Uterus (tissue), 4 donors: ENCODE measurements at regions of chr5 and their contacts with region 1.

Region 1: DNA sequence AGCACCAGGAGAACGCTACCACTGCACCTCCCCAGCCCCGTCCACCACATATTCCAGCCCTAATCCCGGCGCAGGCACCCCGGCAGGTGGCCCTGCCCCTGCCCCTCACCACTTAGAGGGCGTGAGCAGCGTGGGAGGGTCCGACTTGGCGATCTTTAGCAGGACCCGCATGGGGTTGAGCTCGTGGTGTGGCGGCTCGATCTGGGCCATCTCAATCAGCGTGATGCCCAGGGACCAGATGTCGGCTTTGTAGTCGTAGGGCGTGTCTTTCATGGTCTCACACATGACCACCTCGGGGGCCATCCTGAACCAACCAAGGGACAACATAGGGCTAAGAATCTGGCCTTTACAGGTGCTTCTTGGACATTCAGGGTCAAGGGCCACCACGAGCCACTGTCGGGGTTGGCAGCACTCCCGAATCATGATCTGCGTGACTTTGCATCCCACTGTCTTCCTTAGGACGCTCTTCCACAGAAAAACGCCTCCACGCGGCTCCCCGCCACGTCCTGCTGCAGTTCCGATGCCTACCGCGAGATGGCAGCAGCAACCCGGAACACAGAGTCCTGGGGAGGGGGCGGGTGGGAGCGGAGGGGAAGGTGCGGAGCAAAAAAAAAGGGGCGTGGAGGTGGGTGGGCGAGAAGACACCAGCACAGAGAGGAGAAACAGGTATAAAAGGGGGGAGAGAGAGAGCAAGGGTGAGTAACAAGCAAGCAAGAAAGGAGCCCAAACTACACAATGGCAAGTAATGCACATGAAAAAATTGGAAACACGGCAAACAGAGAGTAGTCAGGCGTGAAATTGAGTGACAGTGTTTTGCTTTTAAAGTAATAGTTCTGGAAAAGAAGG is 81.3 kb downstream of the STK10 start:
- DNase-seq: peak; percentile 56 to 70
- H3K4me3 ChIP-seq: peak overlapping the region in 1 of 2 donors; percentile 35
- H3K27ac ChIP-seq: no peak overlapping the region
- H3K4me1 ChIP-seq: no peaks in the 10 kb centered on the region
- H3K27me3 ChIP-seq: no peaks in the 10 kb centered on the region
- CTCF ChIP-seq: peak; percentile 82 to 100 (median 91)
- POLR2A ChIP-seq: no peak

Region 2: GRCh38 chr5:172188033-172188892 is 81.5 kb after region 1 on chr5 and contains the start of gene STK10:
- intact Hi-C with region 1: loop called (anchors 5 kb)
- DNase-seq: peak; percentile 83 to 91
- H3K4me3 ChIP-seq: peak within 1 kb of the TSS; percentile 67 to 77
- H3K27ac ChIP-seq: peak within 1 kb of the TSS; percentile 71 to 84
- H3K4me1 ChIP-seq: no peaks in the 10 kb centered on the region
- H3K27me3 ChIP-seq: no peaks in the 10 kb centered on the region
- CTCF ChIP-seq: peak; percentile 83 to 89 (median 87)
- POLR2A ChIP-seq: peak in 1 of 2 donors; percentile 60
- total RNA-seq, gene STK10: 3.3 to 24.6 (median 13.4) TPM

Region 3: DNA sequence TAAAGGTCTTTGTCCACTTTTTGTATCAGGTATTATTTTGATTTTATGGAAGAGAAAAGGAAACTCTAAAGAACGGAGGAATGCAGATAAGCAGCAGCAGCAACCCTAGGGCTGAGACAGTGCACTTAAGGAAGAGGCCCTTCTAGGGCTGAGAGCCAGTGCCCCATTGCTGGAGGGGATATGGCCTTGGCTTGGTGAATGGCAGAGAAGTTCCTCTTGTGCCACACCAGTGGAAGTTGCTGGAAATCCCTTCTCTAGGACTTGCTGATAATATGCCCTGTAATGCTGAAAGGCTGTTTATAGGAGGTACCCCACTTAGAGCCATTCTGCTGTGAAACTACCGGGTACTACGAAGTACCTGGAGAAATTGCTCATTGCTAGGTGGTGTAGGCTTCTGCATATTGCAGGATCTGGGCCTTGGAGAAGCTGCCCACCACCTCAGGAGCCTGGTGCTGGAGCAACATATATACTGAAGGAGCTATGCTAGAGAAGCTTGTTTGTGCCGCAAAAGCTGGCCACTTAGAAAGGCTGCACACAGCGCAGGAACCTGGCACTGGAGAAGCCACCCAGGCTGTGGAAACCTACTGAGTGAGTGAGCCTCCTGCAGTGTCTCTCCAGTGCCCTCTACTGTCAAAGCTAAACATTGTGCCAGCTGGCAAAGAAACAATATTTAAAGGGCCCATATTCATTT is 186.5 kb after region 1 on chr5:
- intact Hi-C with region 1: loop called (anchors 5 kb)
- DNase-seq: peak; percentile 48 to 58
- H3K4me3 ChIP-seq: no peak overlapping the region
- H3K27ac ChIP-seq: no peak overlapping the region
- H3K4me1 ChIP-seq: no peaks in the 10 kb centered on the region
- H3K27me3 ChIP-seq: no peaks in the 10 kb centered on the region
- CTCF ChIP-seq: peak; percentile 68 to 83 (median 76)
- POLR2A ChIP-seq: no peak